ENCODE measurements at regions of chr1 and their contacts with region 1.

Region 1: DNA sequence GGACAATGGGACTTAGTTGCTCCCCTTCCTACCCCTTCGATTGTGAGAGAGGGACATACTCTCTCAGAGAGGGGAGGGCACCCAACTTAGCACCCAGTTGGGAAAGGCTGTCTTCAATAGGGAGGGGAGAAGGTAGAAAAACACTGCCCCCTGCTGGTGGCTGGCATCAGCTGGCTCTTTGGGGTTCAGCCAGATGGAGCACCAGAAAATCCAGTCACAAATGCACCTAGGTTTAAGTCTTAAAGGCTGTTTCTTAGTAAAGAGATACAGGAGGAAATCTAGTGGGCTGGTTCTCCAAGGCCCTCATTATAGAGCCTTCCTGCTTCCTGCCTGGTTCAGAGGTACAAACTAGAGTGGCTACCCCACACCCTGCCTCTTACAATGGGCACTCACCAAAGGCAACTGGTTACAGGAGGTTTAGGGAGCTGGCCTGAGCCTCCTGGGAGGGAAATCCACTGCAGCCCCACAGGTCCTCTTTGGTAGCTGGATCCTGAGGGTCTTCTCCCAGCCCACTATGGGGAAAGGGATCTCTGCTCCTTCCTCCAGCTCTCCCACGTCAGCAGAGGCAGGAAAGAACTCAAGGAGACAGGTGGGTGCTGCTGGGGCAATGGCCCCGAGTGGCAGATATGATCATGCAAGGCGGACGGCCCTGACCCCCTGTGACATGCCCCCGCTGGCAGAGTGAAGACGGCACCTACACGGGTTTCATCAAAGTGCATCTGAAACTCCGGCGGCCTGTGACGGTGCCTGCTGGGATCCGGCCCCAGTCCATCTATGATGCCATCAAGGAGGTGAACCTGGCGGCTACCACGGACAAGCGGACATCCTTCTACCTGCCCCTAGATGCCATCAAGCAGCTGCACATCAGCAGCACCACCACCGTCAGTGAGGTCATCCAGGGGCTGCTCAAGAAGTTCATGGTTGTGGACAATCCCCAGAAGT is 28.3 kb downstream of the EIF2D start:
- DNase-seq: peak; percentile 84

Region 2: GRCh38 chr1:206489980-206490770 is 93.8 kb before region 1 on chr1:
- intact Hi-C with region 1: loop called (anchors 1 kb)
- DNase-seq: peak; percentile 88

Region 3: GRCh38 chr1:206544562-206545257 is 39.3 kb before region 1 on chr1:
- intact Hi-C with region 1: loop called (anchors 1 kb)
- DNase-seq: peak; percentile 85

Region 4: DNA sequence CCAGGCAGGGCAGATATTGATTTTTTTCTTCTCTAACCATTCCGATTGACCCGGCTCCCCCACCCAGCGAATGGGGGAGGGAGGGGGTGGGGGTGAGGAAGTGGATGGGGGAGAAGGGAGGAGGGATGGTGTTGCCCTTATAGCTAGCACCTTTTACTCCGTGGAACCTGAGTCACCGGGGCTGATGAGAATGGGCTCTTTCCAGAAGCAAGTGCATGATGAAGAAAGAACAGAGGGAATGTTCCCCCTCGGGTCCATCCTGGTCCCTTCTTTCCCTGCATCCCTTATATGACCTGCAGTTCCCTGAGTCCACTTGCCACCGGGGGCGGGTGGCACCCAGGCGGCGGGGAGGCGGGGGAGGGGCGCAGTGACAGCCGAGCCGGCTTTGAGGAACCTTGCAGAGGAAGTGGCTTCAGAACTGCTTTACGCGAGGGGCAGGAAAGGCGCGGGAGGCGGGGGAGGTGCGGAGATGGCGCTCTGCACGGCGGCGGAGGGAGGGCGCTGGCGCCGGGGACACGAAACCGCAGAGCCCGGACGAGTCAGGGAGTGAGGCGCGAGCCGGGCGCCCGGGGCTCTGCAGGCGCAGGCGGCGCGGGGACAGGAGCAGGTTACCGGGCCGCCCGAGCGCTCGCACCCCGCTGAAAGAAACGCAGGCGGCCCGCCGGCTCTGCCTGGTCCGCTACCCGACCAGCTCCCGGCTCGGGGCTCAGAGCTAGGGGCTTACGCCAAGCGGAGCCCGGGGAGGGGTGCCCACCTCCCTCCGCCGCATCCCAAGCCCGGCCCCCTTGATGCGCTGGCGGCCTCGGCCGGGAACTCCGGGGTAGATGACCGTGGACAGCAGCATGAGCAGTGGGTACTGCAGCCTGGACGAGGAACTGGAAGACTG is 27.0 kb before region 1 on chr1:
- intact Hi-C with region 1: loop called (anchors 2 kb)
- DNase-seq: peak; percentile 96

Region 5: GRCh38 chr1:206600527-206600926 is 16.5 kb after region 1 on chr1:
- intact Hi-C with region 1: no loop called
- DNase-seq: no peak